ENCODE measurements at regions of chrX and their contacts with region 1.

Region 1: GRCh38 chrX:96770315-96770714 is 85.7 kb downstream of the DIAPH2 start:
- DNase-seq: no peak
- ATAC-seq: no peak
- H3K4me3 ChIP-seq: no peak overlapping the region
- H3K27ac ChIP-seq: no peak overlapping the region
- H3K4me1 ChIP-seq: peaks cover 0 to 12% (median 0%) of the 10 kb centered on the region in 9 donors
- H3K27me3 ChIP-seq: peaks cover 0 to 13% (median 0%) of the 10 kb centered on the region in 7 donors
- CTCF ChIP-seq: peak in 8 of 9 donors; percentile 7 to 57 (median 46)

Region 2: GRCh38 chrX:96843566-96843965 is 73.3 kb after region 1 on chrX:
- intact Hi-C with region 1: loop called in 1 of 10 experiments (anchors 10 kb)
- DNase-seq: peak in 1 of 2 donors; percentile 3
- ATAC-seq: peak in 1 of 8 donors; percentile 55
- H3K4me3 ChIP-seq: no peak overlapping the region
- H3K27ac ChIP-seq: no peak overlapping the region
- H3K4me1 ChIP-seq: peaks cover 0 to 3% (median 0%) of the 10 kb centered on the region in 9 donors
- H3K27me3 ChIP-seq: peaks cover 0 to 12% (median 0%) of the 10 kb centered on the region in 7 donors
- CTCF ChIP-seq: peak in 3 of 9 donors; percentile 20 to 39 (median 37)

Measured in heart right ventricle (tissue), 16 donors.